SK-N-SH (cell line): ENCODE measurements at regions of chr14 and their contacts with region 1.

Region 1: GRCh38 chr14:60184146-60184904 is 19.1 kb upstream of the DHRS7 start:
- DNase-seq: no peak
- H3K4me3 ChIP-seq: peak overlapping the region; percentile 40 to 61
- H3K27ac ChIP-seq: peak overlapping the region in 1 of 2 experiments; percentile 68; a peak in 2 of 4 replicates
- H3K4me1 ChIP-seq: peaks cover 6 to 8% of the 10 kb centered on the region in 2 experiments; a peak in 2 of 4 replicates
- H3K27me3 ChIP-seq: no peaks in the 10 kb centered on the region
- CTCF ChIP-seq: peak; percentile 90
- EP300 ChIP-seq: no peak
- RAD21 ChIP-seq: peak; percentile 93

Region 2: GRCh38 chr14:60064491-60065072 is 119.7 kb before region 1 on chr14:
- CTCF ChIA-PET with region 1: interaction called, 100 read pairs
- POLR2A ChIA-PET with region 1: no interaction called
- DNase-seq: peak; percentile 20
- H3K4me3 ChIP-seq: no peak overlapping the region; a peak in 1 of 4 replicates
- H3K27ac ChIP-seq: no peak overlapping the region
- H3K4me1 ChIP-seq: no peaks in the 10 kb centered on the region
- H3K27me3 ChIP-seq: no peaks in the 10 kb centered on the region
- CTCF ChIP-seq: peak; percentile 74
- EP300 ChIP-seq: no peak
- RAD21 ChIP-seq: peak; percentile 81